Activated T-helper 1 cell treated with anti-CD3 and anti-CD28 coated beads, Interleukin-12 subunit alpha, Interleukin-12 subunit beta, Interleukin-2, Interleukin-4 antibody, amounts not matched to agents 30 ng/mL and 10 ng/mL and 1 ng/mL, durations not matched to agents 14 hours and 24 hours and 36 hours (primary cell): ENCODE measurements at regions of chr18 and their contacts with region 1.

Region 1: GRCh38 chr18:70598406-70598805 is 309.6 kb downstream of the SOCS6 start:
- DNase-seq: no peak
- H3K4me3 Mint-ChIP-seq: no peak overlapping the region
- H3K27ac Mint-ChIP-seq: no peak overlapping the region
- H3K4me1 Mint-ChIP-seq: no peaks in the 10 kb centered on the region
- H3K27me3 Mint-ChIP-seq: no peaks in the 10 kb centered on the region

Region 2: GRCh38 chr18:70578480-70578879 is 19.9 kb before region 1 on chr18:
- intact Hi-C with region 1: no loop called
- DNase-seq: no peak
- H3K4me3 Mint-ChIP-seq: no peak overlapping the region
- H3K27ac Mint-ChIP-seq: no peak overlapping the region
- H3K4me1 Mint-ChIP-seq: no peaks in the 10 kb centered on the region
- H3K27me3 Mint-ChIP-seq: no peaks in the 10 kb centered on the region

Region 3: GRCh38 chr18:71371951-71372605 is 773.7 kb after region 1 on chr18:
- intact Hi-C with region 1: no loop called
- DNase-seq: no peak
- H3K4me3 Mint-ChIP-seq: no peak overlapping the region
- H3K27ac Mint-ChIP-seq: no peak overlapping the region
- H3K4me1 Mint-ChIP-seq: no peaks in the 10 kb centered on the region
- H3K27me3 Mint-ChIP-seq: peaks cover 2% of the 10 kb centered on the region

Region 4: GRCh38 chr18:71784777-71785176 is 1186.4 kb after region 1 on chr18:
- intact Hi-C with region 1: loop called (anchors 10 kb)
- DNase-seq: no peak
- H3K4me3 Mint-ChIP-seq: no peak overlapping the region
- H3K27ac Mint-ChIP-seq: no peak overlapping the region
- H3K4me1 Mint-ChIP-seq: no peaks in the 10 kb centered on the region
- H3K27me3 Mint-ChIP-seq: no peaks in the 10 kb centered on the region